MCF 10A (cell line): ENCODE measurements at regions of chr14 and their contacts with region 1.

Region 1: DNA sequence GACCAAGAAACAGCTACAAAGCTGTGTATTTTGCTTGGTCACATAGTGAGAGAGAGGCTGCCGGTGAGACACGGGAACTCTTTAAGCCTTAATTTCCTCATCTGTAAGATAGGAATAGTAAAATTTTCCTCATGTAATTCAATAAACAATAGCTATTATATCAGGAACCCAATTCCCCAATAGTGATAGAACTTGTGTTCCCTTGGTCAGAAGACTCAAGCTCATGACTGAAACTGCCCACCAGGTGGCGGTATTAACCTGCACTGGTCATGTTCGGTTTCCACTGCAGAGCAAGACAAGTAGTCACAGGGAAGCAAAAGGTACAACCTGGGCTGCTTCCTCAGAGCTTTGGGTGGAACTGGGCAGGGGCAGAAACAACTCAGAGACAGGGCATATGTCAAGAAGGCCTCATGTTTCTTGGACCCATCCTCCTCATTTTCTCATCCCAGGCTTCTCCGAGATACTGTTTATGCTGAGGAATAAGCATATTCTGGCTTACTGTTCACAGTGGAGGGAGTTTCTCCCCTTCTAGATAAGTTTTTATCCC is 4.2 kb upstream of the AJUBA start:
- DNase-seq: peak; percentile 87
- H3K4me3 Mint-ChIP-seq: no peak overlapping the region
- H3K27ac Mint-ChIP-seq: no peak overlapping the region
- H3K4me1 Mint-ChIP-seq: peaks cover 6% of the 10 kb centered on the region
- H3K27me3 Mint-ChIP-seq: no peaks in the 10 kb centered on the region
- CTCF ChIP-seq: peak; percentile 75

Region 2: DNA sequence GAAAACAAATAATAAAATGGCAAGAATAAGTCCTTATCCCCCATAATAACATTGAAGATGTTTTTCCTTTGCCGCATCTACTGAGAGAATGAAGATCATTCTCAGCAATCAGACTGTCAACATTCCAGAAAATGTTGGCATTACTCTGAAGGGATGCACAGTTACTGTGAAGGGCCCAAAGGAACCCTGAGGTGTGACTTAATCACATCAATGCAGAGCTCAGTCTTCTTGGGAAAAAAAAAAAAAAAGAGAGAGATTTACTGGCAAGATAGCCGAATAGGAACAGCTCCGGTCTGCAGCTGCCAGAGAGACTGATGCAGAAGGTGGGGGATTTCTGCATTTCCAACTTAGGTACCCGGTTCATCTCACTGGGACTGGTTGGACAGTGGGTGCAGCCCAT is 301.1 kb before region 1 on chr14:
- CTCF ChIA-PET with region 1: no interaction called
- POLR2A ChIA-PET with region 1: no interaction called
- intact Hi-C with region 1: no loop called
- DNase-seq: no peak
- H3K4me3 Mint-ChIP-seq: no peak overlapping the region
- H3K27ac Mint-ChIP-seq: no peak overlapping the region
- H3K4me1 Mint-ChIP-seq: no peaks in the 10 kb centered on the region
- H3K27me3 Mint-ChIP-seq: peaks cover 21% of the 10 kb centered on the region
- CTCF ChIP-seq: no peak

Region 3: GRCh38 chr14:22822571-22823098 is 163.9 kb before region 1 on chr14:
- CTCF ChIA-PET with region 1: interaction called, 3 read pairs
- POLR2A ChIA-PET with region 1: no interaction called
- intact Hi-C with region 1: loop called (anchors 2 kb)
- DNase-seq: peak; percentile 85
- H3K4me3 Mint-ChIP-seq: peak overlapping the region; percentile 29
- H3K27ac Mint-ChIP-seq: no peak overlapping the region
- H3K4me1 Mint-ChIP-seq: peaks cover 18% of the 10 kb centered on the region
- H3K27me3 Mint-ChIP-seq: no peaks in the 10 kb centered on the region
- CTCF ChIP-seq: peak; percentile 86

Region 4: GRCh38 chr14:22939684-22940083 is 46.9 kb before region 1 on chr14:
- CTCF ChIA-PET with region 1: interaction called, 9 read pairs
- POLR2A ChIA-PET with region 1: interaction called, 5 read pairs
- intact Hi-C with region 1: loop called (anchors 1 kb)
- DNase-seq: no peak
- H3K4me3 Mint-ChIP-seq: no peak overlapping the region
- H3K27ac Mint-ChIP-seq: no peak overlapping the region
- H3K4me1 Mint-ChIP-seq: no peaks in the 10 kb centered on the region
- H3K27me3 Mint-ChIP-seq: no peaks in the 10 kb centered on the region
- CTCF ChIP-seq: no peak

Region 5: DNA sequence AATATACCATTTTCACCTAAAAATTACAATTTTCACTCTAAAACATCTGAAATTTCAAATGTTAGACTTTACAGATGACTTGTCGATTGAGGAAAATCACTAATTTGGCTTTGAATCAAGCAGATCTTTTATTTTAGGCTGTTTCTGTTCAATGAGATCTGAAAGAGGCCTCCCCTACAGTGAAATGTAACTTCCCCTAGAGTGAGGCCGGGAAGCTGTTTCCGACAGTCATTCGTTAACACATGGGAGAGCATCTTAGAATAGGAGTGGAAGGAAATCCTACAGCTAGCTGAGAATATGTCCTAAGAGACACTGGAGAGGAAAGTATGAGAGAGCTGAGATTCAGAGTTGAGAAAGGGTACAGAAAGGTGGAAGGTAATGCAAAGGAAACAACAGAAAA is 29.0 kb after region 1 on chr14:
- CTCF ChIA-PET with region 1: interaction called, 25 read pairs
- POLR2A ChIA-PET with region 1: interaction called, 5 read pairs
- intact Hi-C with region 1: no loop called
- DNase-seq: no peak
- H3K4me3 Mint-ChIP-seq: no peak overlapping the region
- H3K27ac Mint-ChIP-seq: no peak overlapping the region
- H3K4me1 Mint-ChIP-seq: peaks cover 6% of the 10 kb centered on the region
- H3K27me3 Mint-ChIP-seq: no peaks in the 10 kb centered on the region
- CTCF ChIP-seq: no peak

Region 6: GRCh38 chr14:23057757-23058653 is 71.4 kb after region 1 on chr14:
- CTCF ChIA-PET with region 1: interaction called, 620 read pairs
- POLR2A ChIA-PET with region 1: interaction called, 133 read pairs
- intact Hi-C with region 1: loop called (anchors 1 kb)
- DNase-seq: peak; percentile 90
- H3K4me3 Mint-ChIP-seq: peak overlapping the region; percentile 83
- H3K27ac Mint-ChIP-seq: no peak overlapping the region
- H3K4me1 Mint-ChIP-seq: peaks cover 40% of the 10 kb centered on the region
- H3K27me3 Mint-ChIP-seq: no peaks in the 10 kb centered on the region
- CTCF ChIP-seq: peak; percentile 94

Region 7: GRCh38 chr14:23109769-23110168 is 123.2 kb after region 1 on chr14:
- CTCF ChIA-PET with region 1: interaction called, 11 read pairs
- POLR2A ChIA-PET with region 1: no interaction called
- intact Hi-C with region 1: loop called (anchors 1 kb)
- DNase-seq: no peak
- H3K4me3 Mint-ChIP-seq: no peak overlapping the region
- H3K27ac Mint-ChIP-seq: no peak overlapping the region
- H3K4me1 Mint-ChIP-seq: peaks cover 5% of the 10 kb centered on the region
- H3K27me3 Mint-ChIP-seq: no peaks in the 10 kb centered on the region
- CTCF ChIP-seq: no peak